ENCODE measurements at regions of chr2 and their contacts with region 1.

Region 1: GRCh38 chr2:178450774-178451525 is at the starts of genes PJVK and PRKRA:
- DNase-seq: peak; percentile 98 to 100 (median 99)
- H3K4me3 ChIP-seq: peak within 1 kb of the TSS; percentile 86
- H3K27ac ChIP-seq: peak within 1 kb of the TSS; percentile 86 to 98
- H3K4me1 ChIP-seq: peaks cover 6% of the 10 kb centered on the region
- H3K27me3 ChIP-seq: no peaks in the 10 kb centered on the region
- CTCF ChIP-seq: peak in 2 of 3 donors; percentile 13 to 31
- EP300 ChIP-seq: peak; percentile 71
- POLR2A ChIP-seq: peak; percentile 94
- total RNA-seq, gene PJVK: 2.6 to 7.3 (median 6.0) TPM
- total RNA-seq, gene PRKRA: 39.6 to 57.8 (median 50.7) TPM

Region 2: DNA sequence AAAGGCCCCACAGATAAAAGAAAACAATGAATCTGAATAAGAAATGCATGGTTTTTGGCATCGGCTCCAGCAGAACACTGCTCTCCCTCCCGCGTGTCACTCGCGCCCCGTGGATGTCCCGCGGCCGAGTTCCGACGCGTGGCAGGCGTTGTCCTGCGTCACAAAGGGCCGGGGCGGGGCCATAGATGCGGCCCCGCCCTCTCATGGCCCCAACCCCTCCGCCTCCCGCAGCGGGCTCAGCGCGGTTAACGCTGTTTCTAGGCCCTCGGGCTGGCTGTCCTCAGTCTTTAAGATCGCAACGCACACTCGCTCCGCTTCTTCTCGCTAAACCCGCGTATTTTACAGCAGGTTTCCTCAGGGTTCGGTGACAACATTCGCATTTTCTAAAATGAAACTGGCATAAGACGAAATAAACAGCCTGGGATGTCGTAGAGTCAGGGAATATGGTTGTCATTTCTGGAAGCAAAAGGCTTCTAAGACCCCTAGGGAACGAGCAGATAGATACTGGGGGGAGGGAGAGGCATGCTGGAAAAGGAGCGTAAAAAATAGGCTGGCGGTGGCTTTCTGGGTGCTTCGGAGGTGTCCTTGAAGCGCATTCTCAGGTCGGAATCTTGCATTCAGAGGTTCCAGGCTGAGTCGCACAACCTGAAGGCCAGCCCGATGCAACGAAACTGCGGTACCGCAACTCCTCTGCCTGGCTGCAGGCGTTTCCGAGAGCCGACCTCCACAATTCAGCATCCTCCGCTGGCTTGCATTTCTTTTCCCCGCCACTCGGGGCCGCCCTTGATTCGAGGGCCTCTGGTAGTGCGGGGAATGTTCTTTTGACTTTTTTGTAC is 27.7 kb after region 1 on chr2 and contains the start of gene FKBP7:
- intact Hi-C with region 1: loop called in 3 of 4 experiments (anchors 1 kb)
- DNase-seq: peak; percentile 88 to 93 (median 91)
- H3K4me3 ChIP-seq: peak within 1 kb of the TSS; percentile 92
- H3K27ac ChIP-seq: peak within 1 kb of the TSS; percentile 86 to 91
- H3K4me1 ChIP-seq: peaks cover 9% of the 10 kb centered on the region
- H3K27me3 ChIP-seq: no peaks in the 10 kb centered on the region
- CTCF ChIP-seq: peak in 1 of 3 donors; percentile 48
- EP300 ChIP-seq: peak; percentile 70
- POLR2A ChIP-seq: peak; percentile 90
- total RNA-seq, gene FKBP7: 31.6 to 69.4 (median 43.3) TPM

Region 3: DNA sequence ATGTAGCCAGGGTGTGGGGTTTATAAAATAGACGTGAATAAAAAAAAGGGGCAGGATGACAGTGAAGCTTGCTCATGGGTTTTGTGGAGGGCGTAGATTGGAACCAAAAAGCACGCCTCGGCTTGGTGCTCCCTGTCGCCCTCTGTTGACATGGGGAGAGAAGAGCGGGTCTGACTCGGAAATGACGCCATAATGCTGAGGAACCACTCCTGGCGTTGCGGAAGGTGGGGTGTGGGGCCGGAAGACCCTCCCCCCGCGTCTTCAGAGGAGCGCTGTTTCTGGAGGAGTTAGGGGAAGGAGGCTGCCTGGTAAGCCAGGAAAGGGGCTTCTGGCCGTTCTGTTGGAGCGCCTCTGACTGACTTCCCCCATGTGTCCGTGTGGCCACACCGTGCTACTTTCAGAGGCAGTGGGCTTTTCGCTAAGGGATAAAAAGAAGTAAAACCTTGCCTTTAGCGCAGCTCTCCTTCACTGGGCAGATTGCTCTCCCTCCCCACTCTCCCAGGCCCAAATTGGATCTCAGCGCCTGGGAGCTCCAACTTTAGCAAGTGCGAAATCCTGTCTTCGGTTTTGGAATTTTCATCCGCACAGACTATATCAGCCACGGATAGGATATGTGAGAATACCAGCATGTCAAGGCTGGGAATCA is 72.1 kb after region 1 on chr2:
- intact Hi-C with region 1: loop called in 1 of 4 experiments (anchors 2 kb)
- DNase-seq: peak; percentile 76 to 89 (median 84)
- H3K4me3 ChIP-seq: peak overlapping the region; percentile 48
- H3K27ac ChIP-seq: no peak overlapping the region
- H3K4me1 ChIP-seq: peaks cover 1% of the 10 kb centered on the region
- H3K27me3 ChIP-seq: no peaks in the 10 kb centered on the region
- CTCF ChIP-seq: peak; percentile 66 to 75 (median 71)
- EP300 ChIP-seq: no peak
- POLR2A ChIP-seq: peak; percentile 48